Activated CD4-positive, alpha-beta memory T cell treated with anti-CD3 and anti-CD28 coated beads for 36 hours (primary cell): ENCODE measurements at regions of chr10 and their contacts with region 1.

Region 1: GRCh38 chr10:103859161-103860086 is 4.0 kb upstream of the SH3PXD2A start:
- DNase-seq: peak; percentile 74
- H3K4me3 Mint-ChIP-seq: no peak overlapping the region
- H3K27ac Mint-ChIP-seq: no peak overlapping the region
- H3K4me1 Mint-ChIP-seq: peaks cover 10% of the 10 kb centered on the region
- H3K27me3 Mint-ChIP-seq: peaks cover 15% of the 10 kb centered on the region

Region 2: GRCh38 chr10:103820101-103821062 is 39.0 kb before region 1 on chr10:
- CTCF ChIA-PET with region 1: no interaction called
- POLR2A ChIA-PET with region 1: no interaction called
- intact Hi-C with region 1: no loop called
- DNase-seq: no peak
- H3K4me3 Mint-ChIP-seq: no peak overlapping the region
- H3K27ac Mint-ChIP-seq: no peak overlapping the region
- H3K4me1 Mint-ChIP-seq: peaks cover 3% of the 10 kb centered on the region
- H3K27me3 Mint-ChIP-seq: no peaks in the 10 kb centered on the region

Region 3: GRCh38 chr10:103845972-103846371 is 13.5 kb before region 1 on chr10:
- CTCF ChIA-PET with region 1: interaction called, 17 read pairs
- POLR2A ChIA-PET with region 1: no interaction called
- intact Hi-C with region 1: no loop called
- DNase-seq: peak; percentile 65
- H3K4me3 Mint-ChIP-seq: no peak overlapping the region
- H3K27ac Mint-ChIP-seq: peak overlapping the region; percentile 31
- H3K4me1 Mint-ChIP-seq: peaks cover 22% of the 10 kb centered on the region
- H3K27me3 Mint-ChIP-seq: no peaks in the 10 kb centered on the region

Region 4: GRCh38 chr10:103990121-103990520 is 130.7 kb after region 1 on chr10:
- CTCF ChIA-PET with region 1: no interaction called
- POLR2A ChIA-PET with region 1: no interaction called
- intact Hi-C with region 1: no loop called
- DNase-seq: no peak
- H3K4me3 Mint-ChIP-seq: no peak overlapping the region
- H3K27ac Mint-ChIP-seq: no peak overlapping the region
- H3K4me1 Mint-ChIP-seq: peaks cover 40% of the 10 kb centered on the region
- H3K27me3 Mint-ChIP-seq: no peaks in the 10 kb centered on the region